Activated CD4-positive, alpha-beta memory T cell treated with anti-CD3 and anti-CD28 coated beads, Interleukin-2, amount 10 ng/mL, durations not matched to agents 7 days and 5 days (primary cell): ENCODE measurements at regions of chr17 and their contacts with region 1.

Region 1: DNA sequence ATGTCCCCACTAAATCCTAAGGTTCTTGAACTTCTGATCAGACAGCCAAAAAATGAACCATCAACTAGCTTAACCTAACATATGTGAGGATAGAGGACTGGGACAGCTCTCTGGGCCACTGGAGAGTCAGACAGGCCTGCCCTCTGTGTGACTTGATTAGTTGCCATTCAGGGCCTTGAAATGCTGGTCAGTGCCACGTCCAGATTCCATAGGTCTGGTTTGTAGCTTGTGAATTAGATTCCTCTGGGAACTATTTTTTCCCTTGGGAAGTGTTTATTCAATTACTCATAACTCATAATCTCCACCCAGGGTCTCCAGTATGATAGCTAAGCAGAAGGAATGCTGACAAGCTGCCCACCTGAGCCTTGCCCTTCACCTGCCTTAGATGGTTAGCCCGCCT is 48.2 kb downstream of the IGF2BP1 start:
- DNase-seq: no peak
- H3K4me3 Mint-ChIP-seq: no peak overlapping the region
- H3K27ac Mint-ChIP-seq: no peak overlapping the region
- H3K4me1 Mint-ChIP-seq: no peaks in the 10 kb centered on the region
- H3K27me3 Mint-ChIP-seq: peaks cover 11% of the 10 kb centered on the region

Region 2: DNA sequence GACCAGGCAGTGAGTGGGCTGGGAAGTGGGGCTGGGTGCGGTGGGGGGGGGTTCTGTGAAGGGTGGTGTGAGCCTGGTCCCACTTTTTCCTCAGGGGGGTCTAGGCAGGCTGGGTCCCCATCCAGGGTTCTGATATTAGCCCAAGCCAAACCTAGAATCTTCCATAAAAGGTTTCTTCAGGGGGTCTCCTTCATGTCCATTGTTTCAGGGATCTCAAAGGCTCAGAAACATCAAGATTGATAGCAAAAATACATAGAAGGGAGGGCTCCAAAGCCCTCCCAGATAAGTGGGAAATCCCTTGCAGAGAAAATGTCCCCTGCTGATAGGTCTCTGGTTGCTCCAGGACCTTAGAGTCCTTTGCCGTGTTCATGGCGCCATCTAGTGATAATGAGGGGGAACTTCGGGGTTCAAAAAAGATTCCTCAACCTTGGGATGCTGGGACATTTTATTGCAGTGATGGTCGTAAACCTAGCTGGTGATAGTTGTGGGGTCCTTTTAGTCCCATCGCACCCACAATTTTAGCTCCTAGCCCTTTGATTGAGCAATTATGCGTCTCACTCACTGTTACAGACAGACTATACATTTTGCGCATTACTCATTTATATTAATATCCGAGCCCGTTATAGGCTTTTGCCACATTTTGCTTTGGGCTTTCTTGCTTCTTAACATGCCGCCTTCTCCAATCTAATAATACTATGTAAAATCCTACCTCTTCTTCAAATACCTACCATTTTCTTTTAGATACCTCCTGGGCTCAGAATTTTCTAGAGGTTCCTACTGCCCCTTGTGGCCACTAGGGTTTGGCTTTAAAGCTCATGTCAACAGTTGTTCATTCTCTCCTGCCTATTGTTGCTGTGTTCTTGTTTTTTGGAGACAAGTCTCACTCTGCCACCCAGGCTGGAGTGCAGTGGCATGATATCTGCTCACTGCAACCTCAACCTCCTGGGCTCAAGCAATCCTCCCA is 13.1 kb before region 1 on chr17:
- CTCF ChIA-PET with region 1: interaction called, 13 read pairs
- POLR2A ChIA-PET with region 1: no interaction called
- DNase-seq: peak; percentile 55
- H3K4me3 Mint-ChIP-seq: no peak overlapping the region
- H3K27ac Mint-ChIP-seq: no peak overlapping the region
- H3K4me1 Mint-ChIP-seq: no peaks in the 10 kb centered on the region
- H3K27me3 Mint-ChIP-seq: peaks cover 5% of the 10 kb centered on the region